ENCODE measurements at regions of chr16 and their contacts with region 1.

Region 1: DNA sequence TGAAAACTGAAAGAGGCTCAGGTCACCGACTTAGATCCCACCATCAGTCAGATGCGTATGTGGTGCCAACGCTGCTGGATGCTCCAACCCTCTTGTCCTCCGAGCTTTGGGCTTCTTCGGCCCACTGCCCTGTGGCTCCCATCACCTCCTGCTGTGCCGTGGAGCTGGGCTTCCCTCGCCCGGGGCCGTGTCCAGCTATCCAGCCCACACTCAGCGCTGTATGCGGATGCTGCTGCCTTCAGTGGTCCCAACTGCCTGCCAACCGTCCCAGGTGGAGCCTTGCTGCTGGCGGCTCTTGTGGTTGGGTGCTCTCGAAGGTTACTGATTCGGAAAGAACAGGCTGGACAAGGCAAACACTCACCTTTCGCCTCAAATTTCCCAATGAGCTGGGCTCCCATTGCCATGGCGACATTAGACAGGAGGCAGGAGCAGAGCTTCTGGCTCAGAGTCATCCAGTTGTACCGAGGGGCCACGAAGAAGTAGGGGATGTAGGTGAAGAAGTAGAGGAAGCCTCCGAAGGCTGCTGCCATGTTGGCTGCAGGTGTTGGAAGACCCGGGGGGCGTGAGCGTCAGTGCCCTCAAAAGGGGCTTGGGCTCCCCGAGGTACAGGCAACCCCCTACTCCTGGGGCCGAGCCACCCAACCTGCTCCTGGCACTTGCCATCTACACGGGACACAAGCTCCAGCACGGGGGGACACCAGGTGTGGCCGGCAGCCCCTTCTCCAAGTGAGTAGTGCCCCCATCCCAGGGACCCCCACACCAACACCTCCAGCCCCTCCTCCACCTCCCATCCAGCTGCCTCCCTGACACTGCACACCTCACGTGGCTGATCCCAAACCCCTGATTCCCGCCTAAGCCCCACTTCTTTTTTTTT is 32.2 kb downstream of the ABCA3 start:
- DNase-seq: no peak
- ATAC-seq: no peak
- H3K4me3 ChIP-seq: no peak overlapping the region
- H3K27ac ChIP-seq: no peak overlapping the region
- H3K4me1 ChIP-seq: no peaks in the 10 kb centered on the region
- H3K27me3 ChIP-seq: peaks cover 15% of the 10 kb centered on the region
- CTCF ChIP-seq: no peak
- POLR2A ChIP-seq: no peak
- RAD21 ChIP-seq: no peak

Region 2: GRCh38 chr16:2267913-2268666 is 40.2 kb before region 1 on chr16 and contains the start of gene RNPS1:
- CTCF ChIA-PET with region 1: no interaction called
- POLR2A ChIA-PET with region 1: interaction called, 12 read pairs
- dilution Hi-C with region 1: no loop called
- in situ Hi-C with region 1: no loop called
- intact Hi-C with region 1: no loop called
- DNase-seq: peak; percentile 94
- ATAC-seq: peak; percentile 96
- H3K4me3 ChIP-seq: peak within 1 kb of the TSS; percentile 60
- H3K27ac ChIP-seq: peak within 1 kb of the TSS; percentile 84
- H3K4me1 ChIP-seq: peaks cover 8% of the 10 kb centered on the region
- H3K27me3 ChIP-seq: no peaks in the 10 kb centered on the region
- CTCF ChIP-seq: no peak
- POLR2A ChIP-seq: peak; percentile 98
- RAD21 ChIP-seq: no peak
- total RNA-seq, gene RNPS1: 57.5 and 65.0 TPM in 2 replicates

Region 3: DNA sequence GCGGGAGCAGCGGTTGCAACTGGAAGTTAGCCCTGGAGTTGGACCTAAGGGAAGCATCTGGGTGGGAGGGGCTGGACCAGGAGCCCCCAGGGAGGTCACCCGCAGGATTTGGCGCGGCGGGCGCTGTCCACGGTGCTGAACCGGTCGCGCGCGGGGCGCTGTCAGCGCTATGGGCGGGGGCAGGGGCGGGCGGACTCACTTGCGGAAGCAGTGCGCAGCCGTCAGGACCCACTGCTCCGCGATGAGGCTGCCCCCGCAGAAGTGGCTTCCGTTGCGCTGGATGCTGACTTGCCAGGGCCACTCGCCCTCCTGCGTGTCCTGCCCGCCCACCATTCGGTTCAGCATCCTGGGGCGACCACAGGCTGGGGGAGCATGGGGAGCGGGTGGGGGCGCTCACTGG is 407.2 kb after region 1 on chr16:
- CTCF ChIA-PET with region 1: no interaction called
- POLR2A ChIA-PET with region 1: no interaction called
- dilution Hi-C with region 1: no loop called
- in situ Hi-C with region 1: no loop called
- intact Hi-C with region 1: no loop called
- DNase-seq: peak; percentile 46
- ATAC-seq: peak; percentile 95
- H3K4me3 ChIP-seq: no peak overlapping the region
- H3K27ac ChIP-seq: no peak overlapping the region
- H3K4me1 ChIP-seq: no peaks in the 10 kb centered on the region
- H3K27me3 ChIP-seq: no peaks in the 10 kb centered on the region
- CTCF ChIP-seq: no peak
- POLR2A ChIP-seq: no peak
- RAD21 ChIP-seq: no peak